PC-9 (cell line): ENCODE measurements at regions of chr22 and their contacts with region 1.

Region 1: GRCh38 chr22:41280066-41280465 is 5.9 kb downstream of the RANGAP1 start:
- DNase-seq: peak in 1 of 2 experiments; percentile 13
- H3K4me3 ChIP-seq: no peak overlapping the region
- H3K27ac ChIP-seq: no peak overlapping the region
- H3K4me1 ChIP-seq: peaks cover 13% of the 10 kb centered on the region
- H3K27me3 ChIP-seq: no peaks in the 10 kb centered on the region
- CTCF ChIP-seq: no peak

Region 2: DNA sequence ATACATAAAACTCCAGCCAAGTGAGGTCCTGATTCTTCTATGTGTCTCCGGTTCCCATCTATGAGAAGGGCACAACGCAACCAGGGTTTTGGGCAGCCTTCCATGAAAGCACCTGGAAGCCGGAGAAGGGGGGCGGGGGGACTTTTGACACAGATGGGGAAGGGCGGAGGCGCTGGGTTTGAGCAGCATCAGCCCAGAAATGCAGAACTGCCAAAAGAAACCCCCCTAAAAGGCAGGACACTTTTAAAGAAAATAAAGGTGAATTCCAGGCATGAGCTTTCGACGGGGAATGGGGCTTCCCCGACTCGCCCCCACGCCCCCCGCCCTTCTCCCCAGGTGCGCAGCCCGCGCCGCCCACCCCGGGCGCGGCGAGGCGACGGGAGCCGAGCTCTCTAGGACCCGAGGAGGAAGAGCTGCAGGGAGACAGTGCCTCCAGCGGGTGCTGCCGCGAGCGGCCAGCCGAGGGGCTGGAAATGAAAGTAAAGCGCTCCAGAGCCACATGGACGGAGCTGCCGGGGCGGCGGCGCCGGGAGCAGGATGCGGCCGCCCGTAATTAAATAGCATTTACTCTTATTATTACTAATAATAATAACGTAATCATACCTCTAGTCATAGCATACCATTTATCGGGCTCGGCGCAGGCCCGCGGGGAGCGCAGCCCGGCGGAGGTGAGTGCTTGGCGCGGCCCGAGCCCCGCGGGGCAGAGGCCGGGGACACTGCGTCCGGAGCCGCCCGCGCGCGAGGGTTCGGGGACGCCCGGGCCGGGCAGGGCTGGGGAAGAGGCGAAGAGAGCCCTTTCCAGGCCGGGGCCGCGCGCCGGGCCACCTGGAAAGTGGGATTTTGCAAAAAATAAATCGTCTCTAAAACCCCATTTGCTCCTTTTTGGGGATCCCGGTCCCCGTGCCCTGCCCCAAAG is 21.3 kb after region 1 on chr22 and contains the start of gene ZC3H7B:
- CTCF ChIA-PET with region 1: interaction called, 3 read pairs
- POLR2A ChIA-PET with region 1: interaction called, 14 read pairs
- intact Hi-C with region 1: no loop called
- DNase-seq: peak; percentile 77 to 79
- H3K4me3 ChIP-seq: peak within 1 kb of the TSS; percentile 99
- H3K27ac ChIP-seq: peak within 1 kb of the TSS; percentile 1; the same call in 1 of the 2 replicates
- H3K4me1 ChIP-seq: peaks cover 37% of the 10 kb centered on the region
- H3K27me3 ChIP-seq: no peaks in the 10 kb centered on the region
- CTCF ChIP-seq: peak; percentile 63
- total RNA-seq, gene ZC3H7B: 54.5 and 62.7 TPM in 2 replicates

Region 3: DNA sequence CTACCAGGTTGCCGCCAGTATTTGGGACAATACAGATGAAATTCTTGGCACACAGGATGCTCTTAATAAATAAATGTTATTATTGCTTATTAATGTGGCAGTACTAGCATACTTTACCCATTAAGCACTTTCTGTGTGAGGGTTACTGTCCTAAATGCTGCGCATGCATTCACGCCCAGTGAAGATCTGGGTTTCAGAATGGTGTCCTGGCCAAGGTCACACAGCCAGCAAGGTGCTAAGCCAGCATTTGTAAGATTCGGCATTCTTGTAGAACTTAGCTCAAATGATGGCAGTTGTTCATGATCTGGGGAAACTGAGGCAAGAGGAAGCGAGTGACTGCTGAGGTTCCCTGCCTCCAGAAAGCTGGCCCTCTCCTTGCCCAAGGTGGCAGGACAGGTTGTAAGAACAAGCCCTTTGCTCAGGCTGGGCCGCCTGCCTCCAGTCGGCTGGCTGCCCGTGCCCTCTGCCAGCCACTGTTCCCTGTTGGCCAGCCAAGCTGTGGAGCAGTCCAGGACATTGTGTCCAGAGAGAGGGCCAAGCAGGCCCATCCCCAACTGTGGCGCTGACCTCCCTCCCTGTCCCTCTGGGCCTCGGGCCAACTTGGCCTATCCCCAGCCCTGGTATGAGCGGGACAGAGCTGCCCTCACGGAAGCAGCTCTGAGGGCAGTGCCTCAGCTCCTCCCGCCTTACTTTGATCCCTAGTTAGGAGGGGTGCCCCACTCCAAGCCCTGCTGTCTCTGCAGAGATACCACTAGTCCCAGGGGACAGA is 137.7 kb after region 1 on chr22:
- CTCF ChIA-PET with region 1: interaction called, 13 read pairs
- POLR2A ChIA-PET with region 1: no interaction called
- intact Hi-C with region 1: no loop called
- DNase-seq: peak in 1 of 2 experiments; percentile 64
- H3K4me3 ChIP-seq: no peak overlapping the region
- H3K27ac ChIP-seq: no peak overlapping the region
- H3K4me1 ChIP-seq: peaks cover 9% of the 10 kb centered on the region; the same call in 1 of the 2 replicates
- H3K27me3 ChIP-seq: no peaks in the 10 kb centered on the region
- CTCF ChIP-seq: no peak